Endothelial cell of umbilical vein (primary cell): ENCODE measurements at regions of chr22 and their contacts with region 1.

Region 1: DNA sequence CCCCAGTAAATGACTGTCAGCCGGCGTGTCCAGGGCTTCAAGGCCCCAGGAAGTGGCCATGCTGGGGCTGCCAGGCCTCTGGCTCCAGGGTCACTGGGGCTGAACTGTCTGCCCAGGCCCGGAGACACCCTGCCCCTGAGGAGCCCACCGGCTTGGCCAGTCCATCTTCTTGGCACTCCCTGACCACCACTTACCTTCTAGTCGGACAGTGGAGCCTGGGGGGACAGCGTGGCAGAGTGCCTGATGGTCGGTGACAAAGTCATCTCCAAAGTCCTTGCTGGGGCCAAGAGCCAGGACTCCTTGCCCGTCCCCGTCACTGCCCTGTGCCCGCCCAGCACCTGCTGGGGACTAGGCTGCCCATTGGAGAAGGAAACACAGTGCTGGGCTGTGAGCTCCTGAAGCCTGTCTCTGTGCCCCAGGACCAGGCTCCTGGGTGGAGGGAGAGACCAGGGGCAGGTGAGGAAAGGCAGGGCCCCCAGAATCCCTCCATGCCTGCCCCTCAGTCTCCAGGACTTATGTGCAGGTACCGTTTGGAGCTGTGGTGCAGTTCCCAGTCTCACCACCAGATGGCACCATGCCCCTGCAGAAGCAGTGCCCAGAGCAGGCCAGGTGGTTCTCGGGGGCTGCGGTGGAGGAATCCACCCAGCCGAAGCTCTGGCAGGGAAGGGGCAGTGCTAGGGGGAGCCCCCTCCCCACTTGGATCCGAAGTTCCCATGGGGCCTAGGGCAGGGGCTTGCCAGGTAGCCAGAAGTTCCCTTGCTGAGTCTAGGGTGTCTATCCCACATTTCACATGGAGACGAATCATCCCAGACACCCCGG is 6.0 kb upstream of the CCDC188 start:
- DNase-seq: peak; percentile 77
- H3K4me3 ChIP-seq: no peak overlapping the region
- H3K27ac ChIP-seq: no peak overlapping the region
- H3K4me1 ChIP-seq: peaks cover 5% of the 10 kb centered on the region
- H3K27me3 ChIP-seq: no peaks in the 10 kb centered on the region
- CTCF ChIP-seq: peak; percentile 92 to 97
- POLR2A ChIP-seq: no peak

Region 2: GRCh38 chr22:20031732-20032406 is 125.0 kb before region 1 on chr22:
- CTCF ChIA-PET with region 1: no interaction called
- POLR2A ChIA-PET with region 1: no interaction called
- dilution Hi-C with region 1: no loop called
- intact Hi-C with region 1: no loop called
- DNase-seq: no peak
- H3K4me3 ChIP-seq: no peak overlapping the region
- H3K27ac ChIP-seq: no peak overlapping the region
- H3K4me1 ChIP-seq: no peaks in the 10 kb centered on the region
- H3K27me3 ChIP-seq: no peaks in the 10 kb centered on the region
- CTCF ChIP-seq: no peak
- POLR2A ChIP-seq: no peak

Region 3: DNA sequence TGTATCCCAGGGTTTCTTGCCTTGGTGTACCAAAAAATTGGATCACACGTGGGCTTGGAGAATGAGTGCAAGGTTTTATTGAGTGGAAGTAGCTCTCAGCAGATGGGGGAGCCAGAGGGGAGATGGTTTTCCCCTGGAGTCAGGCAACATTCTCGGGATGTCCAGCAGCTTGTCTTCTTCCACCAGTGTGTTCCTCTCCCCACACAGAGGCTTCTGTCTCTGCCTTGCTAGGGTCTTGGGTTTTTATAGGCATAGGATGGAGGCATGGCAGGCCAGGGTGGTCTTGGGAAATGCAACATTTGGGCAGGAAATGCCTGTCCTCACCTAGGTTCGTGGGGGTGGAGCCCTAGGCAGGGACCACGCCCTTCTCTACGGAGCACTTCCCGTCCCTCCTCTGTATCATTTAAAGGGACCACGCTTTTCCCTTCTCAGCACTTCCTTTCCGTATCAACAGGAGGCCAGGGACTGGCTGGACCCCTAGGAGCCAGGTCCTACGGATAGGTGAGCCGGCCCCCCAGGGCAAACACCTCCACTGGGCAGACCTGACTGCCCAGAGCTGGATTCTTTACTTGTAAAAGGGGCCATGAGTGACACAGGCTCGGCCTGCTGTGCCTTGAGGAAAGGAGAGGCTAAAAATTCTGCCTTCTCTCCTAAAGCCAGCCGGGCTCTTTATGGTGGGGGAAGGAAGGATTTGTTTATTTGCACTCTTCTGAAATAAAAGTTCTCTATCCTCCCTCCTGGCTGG is 49.3 kb after region 1 on chr22:
- CTCF ChIA-PET with region 1: interaction called, 6 read pairs
- POLR2A ChIA-PET with region 1: no interaction called
- dilution Hi-C with region 1: no loop called
- intact Hi-C with region 1: loop called (anchors 5 kb)
- DNase-seq: peak; percentile 71
- H3K4me3 ChIP-seq: peak overlapping the region; percentile 59 to 75 (median 70)
- H3K27ac ChIP-seq: peak overlapping the region; percentile 62
- H3K4me1 ChIP-seq: peaks cover 35% of the 10 kb centered on the region
- H3K27me3 ChIP-seq: no peaks in the 10 kb centered on the region
- CTCF ChIP-seq: no peak
- POLR2A ChIP-seq: peak; percentile 75

Region 4: DNA sequence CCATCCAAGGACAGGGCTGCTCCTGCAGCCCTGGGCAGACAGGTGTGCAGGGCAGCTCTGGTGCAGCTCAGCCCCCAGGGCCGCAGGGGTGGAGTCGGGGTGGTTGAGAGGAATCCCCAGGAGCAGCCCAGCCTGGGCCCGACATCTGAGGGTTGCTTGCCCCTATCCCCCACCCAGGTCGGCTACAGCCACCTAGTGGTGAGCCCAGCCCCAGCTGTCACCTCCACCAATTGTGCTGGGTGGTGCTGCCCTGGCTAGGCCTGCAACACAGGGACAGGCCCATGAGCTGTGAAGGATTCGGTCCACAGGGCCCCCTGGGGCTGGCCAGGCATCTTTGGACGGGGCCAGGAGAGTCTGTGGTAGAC is 81.7 kb after region 1 on chr22:
- CTCF ChIA-PET with region 1: interaction called, 35 read pairs
- POLR2A ChIA-PET with region 1: no interaction called
- dilution Hi-C with region 1: no loop called
- intact Hi-C with region 1: loop called (anchors 1 kb)
- DNase-seq: peak; percentile 30
- H3K4me3 ChIP-seq: no peak overlapping the region
- H3K27ac ChIP-seq: no peak overlapping the region
- H3K4me1 ChIP-seq: peaks cover 11% of the 10 kb centered on the region
- H3K27me3 ChIP-seq: no peaks in the 10 kb centered on the region
- CTCF ChIP-seq: peak; percentile 51 to 66
- POLR2A ChIP-seq: no peak

Region 5: GRCh38 chr22:20268279-20269012 is 111.6 kb after region 1 on chr22 and contains the start of gene RTN4R:
- CTCF ChIA-PET with region 1: interaction called, 24 read pairs
- POLR2A ChIA-PET with region 1: no interaction called
- dilution Hi-C with region 1: no loop called
- intact Hi-C with region 1: loop called (anchors 1 kb)
- DNase-seq: peak; percentile 15
- H3K4me3 ChIP-seq: peak within 1 kb of the TSS in 1 of 3 experiments; percentile 26
- H3K27ac ChIP-seq: no peak within 1 kb of the TSS
- H3K4me1 ChIP-seq: no peaks in the 10 kb centered on the region
- H3K27me3 ChIP-seq: no peaks in the 10 kb centered on the region
- CTCF ChIP-seq: peak; percentile 51 to 73
- POLR2A ChIP-seq: no peak
- total RNA-seq, gene RTN4R: 1.2 and 1.3 TPM in 2 replicates

Region 6: GRCh38 chr22:20283674-20284066 is 126.8 kb after region 1 on chr22:
- CTCF ChIA-PET with region 1: interaction called, 52 read pairs
- POLR2A ChIA-PET with region 1: no interaction called
- dilution Hi-C with region 1: no loop called
- intact Hi-C with region 1: loop called (anchors 1 kb)
- DNase-seq: no peak
- H3K4me3 ChIP-seq: no peak overlapping the region
- H3K27ac ChIP-seq: no peak overlapping the region
- H3K4me1 ChIP-seq: no peaks in the 10 kb centered on the region
- H3K27me3 ChIP-seq: no peaks in the 10 kb centered on the region
- CTCF ChIP-seq: no peak
- POLR2A ChIP-seq: no peak

Region 7: GRCh38 chr22:20292673-20293232 is 135.9 kb after region 1 on chr22:
- CTCF ChIA-PET with region 1: interaction called, 25 read pairs
- POLR2A ChIA-PET with region 1: no interaction called
- dilution Hi-C with region 1: no loop called
- intact Hi-C with region 1: no loop called
- DNase-seq: no peak
- H3K4me3 ChIP-seq: no peak overlapping the region
- H3K27ac ChIP-seq: no peak overlapping the region
- H3K4me1 ChIP-seq: no peaks in the 10 kb centered on the region
- H3K27me3 ChIP-seq: peaks cover 0 to 5% of the 10 kb centered on the region in 2 experiments
- CTCF ChIP-seq: no peak
- POLR2A ChIP-seq: no peak

Region 8: DNA sequence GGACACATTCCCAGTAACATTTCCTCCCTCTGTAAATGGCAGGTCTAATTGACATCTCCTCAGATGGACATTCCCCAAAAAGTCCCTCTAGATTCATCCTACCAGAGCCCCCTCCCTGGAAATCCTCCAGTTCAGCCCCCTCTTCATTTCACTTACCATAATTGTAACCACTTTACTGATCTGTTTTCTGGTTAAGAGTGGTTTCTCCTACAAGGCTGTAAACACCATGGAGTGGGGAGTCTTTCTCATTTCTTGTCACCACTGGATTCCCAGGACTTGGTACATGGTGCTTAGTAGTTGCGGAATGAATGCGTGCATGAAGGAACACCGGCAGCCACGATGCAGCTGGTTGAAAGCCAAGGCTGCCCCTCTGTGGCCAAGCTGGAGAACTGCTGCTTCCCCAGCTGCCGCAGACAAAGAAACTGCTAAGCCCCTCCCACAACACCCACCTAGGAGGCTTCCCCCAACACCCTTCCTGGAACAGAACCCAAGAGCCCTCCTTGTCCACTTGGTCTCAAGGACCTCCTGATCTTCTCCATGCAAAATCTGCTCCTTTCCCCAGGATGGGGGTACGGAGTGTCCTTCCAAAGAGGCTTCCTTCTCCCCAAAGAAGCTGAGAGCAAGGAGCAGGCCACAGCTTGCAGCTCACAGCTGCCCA is 299.4 kb after region 1 on chr22:
- CTCF ChIA-PET with region 1: interaction called, 3 read pairs
- POLR2A ChIA-PET with region 1: no interaction called
- dilution Hi-C with region 1: no loop called
- intact Hi-C with region 1: loop called (anchors 5 kb)
- DNase-seq: peak; percentile 86
- H3K4me3 ChIP-seq: no peak overlapping the region
- H3K27ac ChIP-seq: no peak overlapping the region
- H3K4me1 ChIP-seq: no peaks in the 10 kb centered on the region
- H3K27me3 ChIP-seq: no peaks in the 10 kb centered on the region
- CTCF ChIP-seq: peak; percentile 88 to 96
- POLR2A ChIP-seq: no peak